Activated CD4-positive, alpha-beta T cell treated with anti-CD3 and anti-CD28 coated beads for 36 hours (primary cell): ENCODE measurements at regions of chr14 and their contacts with region 1.

Region 1: DNA sequence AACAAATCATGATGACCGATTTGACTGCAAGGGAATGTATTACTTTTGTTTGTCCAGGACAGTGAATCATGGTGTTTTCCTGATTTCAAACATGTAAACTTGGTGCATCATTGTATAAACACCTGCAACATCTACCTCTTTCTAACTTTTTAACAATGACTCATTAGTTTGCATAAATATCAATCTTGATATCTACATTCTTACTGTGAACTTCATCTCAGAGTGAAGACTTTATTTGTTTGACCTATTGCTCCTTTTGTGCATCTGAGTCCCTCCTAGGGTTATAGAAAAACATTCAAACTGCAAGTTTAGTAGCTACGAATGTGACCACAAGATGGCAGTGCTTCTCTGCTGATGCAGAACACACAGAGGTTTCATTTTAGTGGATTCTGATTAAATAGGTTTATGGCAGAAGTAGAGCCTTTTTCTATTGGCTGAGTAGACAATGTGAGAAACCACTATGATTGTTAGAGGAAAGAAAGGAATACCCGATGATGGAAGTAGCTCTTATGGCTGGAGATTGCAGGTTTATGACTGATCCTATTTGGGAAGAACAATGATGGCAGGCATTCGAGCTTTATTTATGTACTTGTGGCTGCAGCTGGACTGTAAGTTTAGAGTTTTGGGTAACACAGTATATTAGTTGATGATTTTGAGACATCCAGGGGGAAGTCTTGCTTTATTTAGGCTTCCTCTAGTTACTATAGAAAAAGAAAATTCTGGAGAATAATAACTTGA is 244.2 kb upstream of the OR4E1 start:
- DNase-seq: peak; percentile 74
- ATAC-seq: peak; percentile 57
- H3K4me3 Mint-ChIP-seq: peak overlapping the region; percentile 65
- H3K27ac Mint-ChIP-seq: peak overlapping the region; percentile 69
- H3K4me1 Mint-ChIP-seq: peaks cover 57% of the 10 kb centered on the region
- H3K27me3 Mint-ChIP-seq: no peaks in the 10 kb centered on the region

Region 2: GRCh38 chr14:21894003-21894897 is 23.6 kb before region 1 on chr14:
- CTCF ChIA-PET with region 1: interaction called, 6 read pairs
- POLR2A ChIA-PET with region 1: interaction called, 3 read pairs
- intact Hi-C with region 1: loop called in 1 of 2 experiments (anchors 2 kb)
- DNase-seq: peak; percentile 77
- ATAC-seq: peak; percentile 87
- H3K4me3 Mint-ChIP-seq: peak overlapping the region; percentile 65
- H3K27ac Mint-ChIP-seq: peak overlapping the region; percentile 85
- H3K4me1 Mint-ChIP-seq: peaks cover 11% of the 10 kb centered on the region
- H3K27me3 Mint-ChIP-seq: no peaks in the 10 kb centered on the region

Region 3: DNA sequence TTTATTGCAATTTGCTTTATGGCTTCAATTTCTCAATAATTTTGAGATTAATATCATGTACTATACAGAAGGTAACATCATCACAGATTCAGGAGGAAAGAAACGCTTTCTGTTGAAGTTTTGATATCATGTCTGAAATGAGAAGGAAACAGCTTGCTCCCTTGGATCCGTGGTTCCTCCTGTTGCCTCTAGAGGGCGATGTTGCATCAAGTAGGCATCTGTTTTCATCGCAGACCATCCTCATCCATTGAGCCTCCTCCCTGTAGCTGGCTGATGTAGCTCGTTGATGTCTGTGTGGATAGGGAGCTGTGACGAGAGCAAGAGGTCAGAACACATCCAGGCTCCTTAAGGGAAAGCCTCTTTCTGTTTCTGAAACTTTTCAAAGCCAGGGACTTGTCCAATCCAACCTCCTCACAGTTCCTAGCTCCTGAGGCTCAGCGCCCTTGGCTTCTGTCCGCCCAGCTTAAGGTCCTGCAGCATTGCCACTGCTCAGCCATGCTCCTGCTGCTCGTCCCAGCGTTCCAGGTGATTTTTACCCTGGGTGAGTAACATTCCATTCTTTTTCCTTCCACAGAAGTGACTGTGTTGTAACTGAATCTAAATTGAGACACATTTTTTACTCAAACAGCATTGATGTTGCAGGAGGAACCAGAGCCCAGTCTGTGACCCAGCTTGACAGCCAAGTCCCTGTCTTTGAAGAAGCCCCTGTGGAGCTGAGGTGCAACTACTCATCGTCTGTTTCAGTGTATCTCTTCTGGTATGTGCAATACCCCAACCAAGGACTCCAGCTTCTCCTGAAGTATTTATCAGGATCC is 60.5 kb after region 1 on chr14:
- CTCF ChIA-PET with region 1: interaction called, 52 read pairs
- POLR2A ChIA-PET with region 1: no interaction called
- intact Hi-C with region 1: loop called (anchors 1 to 5 kb)
- DNase-seq: peak; percentile 78
- ATAC-seq: peak; percentile 79
- H3K4me3 Mint-ChIP-seq: peak overlapping the region; percentile 70
- H3K27ac Mint-ChIP-seq: peak overlapping the region; percentile 78
- H3K4me1 Mint-ChIP-seq: peaks cover 15% of the 10 kb centered on the region
- H3K27me3 Mint-ChIP-seq: no peaks in the 10 kb centered on the region

Region 4: DNA sequence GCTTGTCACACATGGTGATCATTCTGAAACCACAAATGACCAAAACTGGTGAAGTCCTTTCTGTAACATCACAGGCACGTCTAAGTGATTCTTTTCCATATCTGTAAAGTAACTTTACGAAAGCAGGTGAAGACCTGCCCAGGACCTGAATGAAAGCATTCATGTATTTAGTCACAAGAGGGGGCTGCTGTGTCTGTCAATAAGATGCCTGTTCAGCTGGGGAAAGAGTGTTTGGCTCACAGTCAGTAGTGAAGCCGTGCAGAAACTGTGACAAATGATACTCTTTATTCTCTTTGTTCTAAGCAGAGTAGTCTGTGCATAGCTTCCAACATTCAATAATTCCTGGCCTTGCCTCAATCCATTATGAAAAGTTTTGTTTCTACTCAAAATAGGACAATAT is 129.2 kb after region 1 on chr14:
- CTCF ChIA-PET with region 1: interaction called, 3 read pairs
- POLR2A ChIA-PET with region 1: no interaction called
- intact Hi-C with region 1: loop called in 1 of 2 experiments (anchors 5 kb)
- DNase-seq: peak; percentile 43
- ATAC-seq: peak; percentile 91
- H3K4me3 Mint-ChIP-seq: peak overlapping the region; percentile 39
- H3K27ac Mint-ChIP-seq: peak overlapping the region; percentile 82
- H3K4me1 Mint-ChIP-seq: peaks cover 39% of the 10 kb centered on the region
- H3K27me3 Mint-ChIP-seq: no peaks in the 10 kb centered on the region

Region 5: DNA sequence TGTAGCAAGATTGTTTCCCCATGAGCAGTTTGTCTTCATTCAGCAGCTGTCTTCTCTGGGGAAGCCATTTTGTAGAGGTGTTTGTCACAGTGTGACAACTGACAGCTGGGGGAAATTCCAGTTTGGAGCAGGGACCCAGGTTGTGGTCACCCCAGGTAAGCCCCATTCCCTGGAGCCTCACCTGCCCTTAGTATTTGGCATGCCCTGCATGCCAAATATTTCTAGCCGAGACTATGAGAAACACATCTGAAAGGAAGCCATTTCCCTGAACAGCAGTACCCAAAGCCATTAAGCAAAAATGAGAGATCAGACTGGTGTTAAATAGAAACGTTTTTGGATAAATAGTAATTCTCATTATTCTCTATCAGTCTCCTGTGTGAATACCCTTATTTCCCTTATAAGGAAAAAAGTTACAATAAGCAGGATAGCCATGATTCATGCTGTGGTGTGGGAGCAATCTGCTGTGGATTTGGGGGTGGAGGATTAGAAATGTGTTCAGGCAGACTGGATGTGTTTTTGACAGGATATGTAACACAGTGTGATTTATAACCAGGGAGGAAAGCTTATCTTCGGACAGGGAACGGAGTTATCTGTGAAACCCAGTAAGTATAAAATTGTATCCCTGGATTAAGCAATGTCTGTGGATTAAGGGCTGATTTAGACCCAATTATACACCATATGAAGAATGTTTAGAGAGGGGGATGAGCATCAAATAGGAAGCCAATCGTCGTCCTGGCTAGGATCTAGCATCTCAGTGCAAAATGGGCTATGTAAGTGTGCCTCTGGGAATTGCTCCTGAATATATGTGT is 602.2 kb after region 1 on chr14:
- CTCF ChIA-PET with region 1: interaction called, 5 read pairs
- POLR2A ChIA-PET with region 1: no interaction called
- intact Hi-C with region 1: loop called in 1 of 2 experiments (anchors 10 kb)
- DNase-seq: no peak
- ATAC-seq: peak; percentile 14
- H3K4me3 Mint-ChIP-seq: peak overlapping the region; percentile 84
- H3K27ac Mint-ChIP-seq: peak overlapping the region; percentile 97
- H3K4me1 Mint-ChIP-seq: peaks cover 87% of the 10 kb centered on the region
- H3K27me3 Mint-ChIP-seq: no peaks in the 10 kb centered on the region